Common myeloid progenitor, CD34-positive (primary cell): ENCODE measurements at regions of chr16 and their contacts with region 1.

Region 1: GRCh38 chr16:67349172-67349571 is 22.6 kb downstream of the LRRC36 start:
- DNase-seq: peak; percentile 48 to 71 (median 67)
- H3K4me3 ChIP-seq: no peak overlapping the region
- H3K27ac ChIP-seq: no peak overlapping the region
- H3K4me1 ChIP-seq: no peaks in the 10 kb centered on the region
- H3K27me3 ChIP-seq: no peaks in the 10 kb centered on the region

Region 2: DNA sequence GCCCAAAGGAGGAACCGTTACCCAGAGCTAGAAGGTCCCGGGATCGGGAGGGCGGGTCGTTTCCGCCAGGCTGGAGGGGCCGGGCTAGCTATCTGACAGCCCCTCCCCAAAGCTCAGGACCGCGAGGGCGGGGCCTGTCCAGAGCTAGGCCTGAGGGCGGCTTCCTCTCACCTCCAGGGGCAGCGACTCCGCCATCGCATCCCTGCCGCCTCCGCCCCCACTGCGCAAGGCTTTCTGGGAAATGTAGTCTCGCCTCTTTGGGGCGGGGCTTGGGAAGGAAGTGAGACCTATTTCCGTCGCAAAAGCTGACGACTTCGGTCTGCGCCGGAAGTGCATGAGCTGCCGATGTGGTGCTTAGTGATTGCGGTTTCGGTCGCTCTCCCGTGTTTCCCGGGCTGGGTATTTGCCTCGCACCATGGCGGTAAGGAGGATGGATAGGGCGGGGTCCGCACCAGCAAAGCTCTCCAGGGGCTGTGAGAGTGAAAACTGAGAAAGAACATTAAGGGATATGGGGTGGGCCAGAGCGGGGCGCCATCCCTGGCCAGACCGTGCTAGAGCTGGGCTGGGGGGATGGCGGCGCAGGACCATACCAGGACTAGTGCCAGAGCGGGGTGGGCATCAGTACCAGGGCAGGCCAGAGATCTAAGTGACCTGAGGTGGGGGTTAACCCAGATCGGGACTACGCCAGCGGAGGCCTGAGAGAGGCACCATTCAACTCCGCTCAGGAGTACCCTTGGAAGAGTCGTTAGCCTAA is 122.2 kb before region 1 on chr16 and contains the start of gene TMEM208:
- CTCF ChIA-PET with region 1: no interaction called
- POLR2A ChIA-PET with region 1: no interaction called
- DNase-seq: peak; percentile 99
- H3K4me3 ChIP-seq: peak within 1 kb of the TSS; percentile 80 to 97 (median 90)
- H3K27ac ChIP-seq: peak within 1 kb of the TSS; percentile 74 to 88
- H3K4me1 ChIP-seq: peaks cover 11 to 42% (median 32%) of the 10 kb centered on the region in 4 experiments
- H3K27me3 ChIP-seq: no peaks in the 10 kb centered on the region

Region 3: DNA sequence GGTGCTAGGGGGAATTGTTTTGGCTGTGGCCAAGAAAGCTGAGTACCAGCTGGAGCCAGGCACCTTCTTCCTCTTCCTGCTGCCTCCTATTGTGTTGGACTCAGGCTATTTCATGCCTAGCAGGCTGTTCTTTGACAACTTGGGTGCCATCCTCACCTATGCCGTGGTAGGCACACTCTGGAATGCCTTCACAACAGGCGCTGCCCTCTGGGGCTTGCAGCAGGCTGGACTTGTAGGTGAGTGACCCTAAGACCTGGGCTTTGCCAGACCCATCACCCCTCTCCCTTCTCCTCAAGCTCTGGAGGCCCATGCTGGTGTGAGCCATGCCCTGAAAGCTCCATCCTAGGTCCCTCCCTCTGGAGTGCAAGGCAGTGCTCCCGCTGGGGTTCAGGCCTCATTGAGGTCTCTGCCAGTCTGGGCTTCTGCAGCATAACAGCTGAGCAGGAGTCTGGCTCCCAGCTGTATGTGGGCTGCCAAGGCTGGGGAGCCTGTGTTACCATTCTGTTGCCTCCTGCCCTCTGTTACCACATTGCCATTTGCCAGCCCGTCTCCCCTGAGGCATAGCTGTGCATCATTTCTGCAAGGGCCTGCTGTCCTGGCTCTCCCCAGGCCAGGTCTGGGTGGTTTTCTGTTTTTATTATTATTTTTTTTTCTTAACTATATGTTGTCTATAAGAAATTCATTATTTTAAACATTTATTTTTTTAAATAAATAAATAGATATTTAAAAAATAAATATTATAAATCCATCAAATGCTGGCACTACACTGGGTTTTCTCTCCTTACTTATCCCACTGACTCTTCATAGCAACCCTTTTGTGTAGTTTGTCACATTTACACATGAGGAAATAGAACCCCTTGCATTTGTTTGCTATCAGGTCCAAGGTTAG is 96.3 kb before region 1 on chr16:
- CTCF ChIA-PET with region 1: no interaction called
- POLR2A ChIA-PET with region 1: no interaction called
- DNase-seq: no peak
- H3K4me3 ChIP-seq: no peak overlapping the region
- H3K27ac ChIP-seq: no peak overlapping the region
- H3K4me1 ChIP-seq: peaks cover 2 to 19% (median 16%) of the 10 kb centered on the region in 4 experiments
- H3K27me3 ChIP-seq: peaks cover 0 to 23% (median 13%) of the 10 kb centered on the region in 5 experiments

Region 4: GRCh38 chr16:67317853-67318252 is 31.3 kb before region 1 on chr16:
- CTCF ChIA-PET with region 1: no interaction called
- POLR2A ChIA-PET with region 1: no interaction called
- DNase-seq: no peak
- H3K4me3 ChIP-seq: no peak overlapping the region
- H3K27ac ChIP-seq: no peak overlapping the region
- H3K4me1 ChIP-seq: no peaks in the 10 kb centered on the region
- H3K27me3 ChIP-seq: peaks cover 0 to 6% (median 0%) of the 10 kb centered on the region in 5 experiments

Region 5: DNA sequence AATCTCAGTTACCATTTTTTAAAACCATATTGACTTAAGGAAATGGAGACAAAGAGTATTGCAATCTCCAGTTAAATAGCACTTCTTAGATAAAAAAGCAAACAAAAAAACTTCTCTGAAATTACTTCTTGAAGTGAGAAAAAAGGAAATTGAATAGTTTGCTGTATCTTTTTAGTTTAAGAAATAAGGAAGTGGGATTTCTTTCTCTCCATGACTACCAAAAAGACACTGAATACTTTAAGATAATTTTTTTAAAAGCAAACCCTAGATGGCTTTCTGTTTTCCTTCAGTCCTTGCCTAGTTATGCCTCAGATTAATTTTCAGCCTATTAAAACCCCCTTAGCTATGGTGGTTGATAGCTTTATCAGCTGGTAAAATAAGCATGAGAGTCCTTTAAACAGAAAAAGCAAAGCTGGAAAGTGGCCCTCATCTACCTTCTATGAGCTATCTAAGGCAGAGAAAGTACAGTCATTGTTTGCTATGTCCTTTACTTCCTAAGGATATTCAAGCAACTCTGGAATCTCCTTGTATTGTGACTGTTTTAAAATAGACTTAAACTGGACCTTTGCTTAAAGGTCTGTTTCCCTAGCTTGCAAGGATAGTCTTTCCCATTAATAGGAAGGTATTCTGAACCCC is 15.5 kb after region 1 on chr16:
- CTCF ChIA-PET with region 1: interaction called, 12 read pairs
- POLR2A ChIA-PET with region 1: no interaction called
- DNase-seq: peak; percentile 31 to 75 (median 64)
- H3K4me3 ChIP-seq: peak overlapping the region in 3 of 7 experiments; percentile 31 to 55 (median 31)
- H3K27ac ChIP-seq: peak overlapping the region; percentile 33 to 75
- H3K4me1 ChIP-seq: peaks cover 15 to 24% (median 20%) of the 10 kb centered on the region in 4 experiments
- H3K27me3 ChIP-seq: peaks cover 0 to 1% (median 0%) of the 10 kb centered on the region in 5 experiments

Region 6: DNA sequence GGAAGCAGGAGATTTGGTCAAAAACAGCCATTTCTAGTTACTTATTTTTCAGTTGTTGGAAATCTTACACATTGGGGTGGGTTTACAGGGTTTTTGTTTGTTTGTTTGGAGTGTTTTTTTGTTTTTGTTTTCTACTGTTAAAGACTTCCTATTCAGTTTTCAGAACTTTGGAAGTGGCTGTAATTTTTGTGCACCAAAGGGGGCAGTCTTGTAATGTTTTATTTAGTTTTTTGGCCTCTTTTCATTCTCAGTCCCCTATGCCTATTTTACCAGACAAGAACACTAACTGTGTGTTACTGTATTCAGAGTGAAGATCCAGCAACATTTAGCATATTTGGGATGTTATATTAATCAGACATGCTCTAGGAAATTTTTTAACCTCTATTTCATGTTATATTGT is 23.5 kb after region 1 on chr16:
- CTCF ChIA-PET with region 1: interaction called, 11 read pairs
- POLR2A ChIA-PET with region 1: no interaction called
- DNase-seq: peak in 2 of 3 donors; percentile 57 to 65
- H3K4me3 ChIP-seq: no peak overlapping the region
- H3K27ac ChIP-seq: no peak overlapping the region
- H3K4me1 ChIP-seq: no peaks in the 10 kb centered on the region
- H3K27me3 ChIP-seq: peaks cover 0 to 3% (median 0%) of the 10 kb centered on the region in 5 experiments